Psoas muscle (tissue), 8 donors: ENCODE measurements at regions of chrX and their contacts with region 1.

Region 1: DNA sequence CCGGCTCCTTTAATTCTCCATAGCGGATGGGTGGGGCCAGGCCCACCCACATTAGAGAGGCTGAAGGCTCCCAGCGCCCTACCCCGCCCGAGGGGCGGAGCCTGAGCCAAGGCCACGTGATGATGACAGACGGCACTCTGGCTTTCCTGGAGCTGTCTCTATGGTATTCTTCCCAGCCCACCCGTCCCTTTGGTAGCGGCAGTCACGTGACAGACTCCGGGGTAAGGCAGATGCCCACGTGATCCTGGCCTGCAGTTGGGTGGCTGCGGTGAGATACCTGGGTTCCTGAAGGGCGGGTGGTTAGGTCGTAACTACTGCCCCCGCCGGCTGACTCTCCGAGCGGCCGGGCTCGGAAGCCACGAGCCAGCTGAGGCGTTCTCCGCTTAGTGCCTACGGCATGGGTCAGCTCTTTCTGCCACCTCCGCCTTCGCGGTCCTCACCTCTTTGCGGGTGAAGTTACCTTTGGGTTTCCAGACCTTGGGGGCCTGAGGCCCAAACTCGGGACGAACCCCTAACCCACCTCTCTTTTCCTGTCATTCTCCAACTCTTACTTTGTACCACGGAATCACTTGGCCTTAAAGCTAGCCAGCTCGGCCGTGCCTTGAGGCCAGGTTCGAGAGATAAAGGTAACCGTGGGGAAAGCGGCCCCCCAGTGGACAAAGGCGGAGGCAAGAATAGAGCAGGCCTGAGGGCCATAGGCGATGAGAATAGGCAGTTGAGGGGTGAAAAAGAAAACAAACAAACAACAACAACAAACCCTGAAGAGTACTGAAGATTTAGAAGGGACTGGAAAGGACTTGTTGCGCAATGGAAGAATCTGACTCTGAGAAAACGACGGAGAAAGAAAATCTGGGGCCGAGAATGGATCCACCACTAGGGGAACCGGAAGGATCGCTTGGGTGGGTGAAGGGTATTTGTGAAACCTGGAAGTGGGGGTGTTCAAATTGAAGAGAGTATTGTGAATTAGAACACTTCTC is at the start of gene RRAGB:
- DNase-seq: peak; percentile 92 to 96
- ATAC-seq: peak; percentile 98 to 100 (median 100)
- H3K4me3 ChIP-seq: peak within 1 kb of the TSS; percentile 76
- H3K27ac ChIP-seq: peak within 1 kb of the TSS; percentile 86
- H3K4me1 ChIP-seq: peaks cover 4% of the 10 kb centered on the region
- H3K27me3 ChIP-seq: no peaks in the 10 kb centered on the region
- CTCF ChIP-seq: peak; percentile 46
- total RNA-seq, gene RRAGB: 7.0 to 11.8 (median 8.3) TPM

Region 2: GRCh38 chrX:54529552-54530357 is 1188.1 kb before region 1 on chrX and contains the start of gene GNL3L:
- intact Hi-C with region 1: loop called in 1 of 2 experiments (anchors 10 kb)
- DNase-seq: peak; percentile 83 to 94
- ATAC-seq: peak; percentile 94 to 96 (median 94)
- H3K4me3 ChIP-seq: peak within 1 kb of the TSS; percentile 81
- H3K27ac ChIP-seq: peak within 1 kb of the TSS; percentile 84
- H3K4me1 ChIP-seq: no peaks in the 10 kb centered on the region
- H3K27me3 ChIP-seq: peaks cover 0 to 7% (median 0%) of the 10 kb centered on the region in 3 donors
- CTCF ChIP-seq: no peak
- total RNA-seq, gene GNL3L: 30.7 to 36.1 (median 33.3) TPM

Region 3: DNA sequence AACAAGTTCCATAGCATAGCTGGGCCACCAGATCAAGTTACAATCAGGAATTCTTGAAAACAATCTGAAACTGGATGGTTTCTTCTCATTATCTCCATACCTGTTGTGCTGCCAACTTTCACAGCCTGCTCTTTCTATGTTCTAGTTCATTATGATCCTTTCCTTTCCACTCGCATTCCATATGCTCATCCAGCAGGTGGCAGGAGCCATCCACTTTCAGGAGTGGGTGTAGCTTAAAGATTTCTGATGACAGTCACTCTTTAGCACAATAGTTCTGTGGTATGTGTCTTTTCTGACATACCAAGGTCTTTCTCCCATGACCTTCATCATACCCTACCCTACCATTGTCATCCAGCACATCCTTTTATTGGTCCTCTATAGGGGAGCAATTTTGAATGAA is 582.6 kb before region 1 on chrX:
- intact Hi-C with region 1: loop called in 1 of 2 experiments (anchors 10 kb)
- DNase-seq: peak; percentile 19 to 50
- ATAC-seq: peak in 2 of 4 donors; percentile 61 to 83
- H3K4me3 ChIP-seq: no peak overlapping the region
- H3K27ac ChIP-seq: no peak overlapping the region
- H3K4me1 ChIP-seq: no peaks in the 10 kb centered on the region
- H3K27me3 ChIP-seq: peaks cover 0 to 18% (median 0%) of the 10 kb centered on the region in 3 donors
- CTCF ChIP-seq: peak; percentile 51